B cell (primary cell): ENCODE measurements at regions of chr10 and their contacts with region 1.

Region 1: DNA sequence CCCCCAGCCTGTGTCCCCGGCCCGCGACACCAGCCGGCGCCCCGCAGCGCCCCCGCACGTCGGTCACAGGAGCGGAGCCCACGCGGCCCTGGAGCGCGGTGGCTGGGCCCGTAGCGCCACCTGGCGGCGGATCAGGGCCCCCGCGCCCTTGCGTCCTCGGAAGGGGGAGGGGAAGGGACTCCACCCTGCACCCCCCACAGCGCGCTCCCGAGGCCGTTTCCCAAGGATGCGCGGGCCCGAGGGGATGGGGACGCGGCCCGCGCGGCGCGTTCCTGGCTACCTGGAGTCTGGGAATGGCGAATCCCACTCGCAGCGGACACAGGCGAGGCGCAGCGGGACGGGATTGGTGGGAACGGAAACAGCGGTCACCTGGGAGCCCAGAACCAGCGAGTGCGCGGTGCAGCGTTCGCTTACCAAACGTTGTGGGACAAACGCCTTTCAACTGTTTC is 23.8 kb upstream of the MKI67 start:
- DNase-seq: peak; percentile 85
- ATAC-seq: peak; percentile 84
- H3K4me3 ChIP-seq: peak overlapping the region; percentile 28 to 55 (median 49)
- H3K4me3 Mint-ChIP-seq: peak overlapping the region; percentile 66
- H3K27ac ChIP-seq: no peak overlapping the region
- H3K27ac Mint-ChIP-seq: no peak overlapping the region
- H3K4me1 ChIP-seq: peaks cover 16 to 24% of the 10 kb centered on the region in 2 donors
- H3K4me1 Mint-ChIP-seq: peaks cover 36% of the 10 kb centered on the region
- H3K27me3 ChIP-seq: peaks cover 0 to 14% (median 2%) of the 10 kb centered on the region in 4 experiments
- H3K27me3 Mint-ChIP-seq: peaks cover 28% of the 10 kb centered on the region
- CTCF ChIP-seq: peak; percentile 77

Region 2: GRCh38 chr10:127738512-127739424 is 411.3 kb before region 1 on chr10:
- CTCF ChIA-PET with region 1: no interaction called
- POLR2A ChIA-PET with region 1: no interaction called
- intact Hi-C with region 1: no loop called
- DNase-seq: no peak
- ATAC-seq: no peak
- H3K4me3 ChIP-seq: no peak overlapping the region
- H3K4me3 Mint-ChIP-seq: no peak overlapping the region
- H3K27ac ChIP-seq: no peak overlapping the region
- H3K27ac Mint-ChIP-seq: no peak overlapping the region
- H3K4me1 ChIP-seq: peaks cover 0 to 3% of the 10 kb centered on the region in 2 donors
- H3K4me1 Mint-ChIP-seq: peaks cover 1% of the 10 kb centered on the region
- H3K27me3 ChIP-seq: peaks cover 0 to 32% (median 5%) of the 10 kb centered on the region in 4 experiments
- H3K27me3 Mint-ChIP-seq: peaks cover 23% of the 10 kb centered on the region
- CTCF ChIP-seq: no peak

Region 3: DNA sequence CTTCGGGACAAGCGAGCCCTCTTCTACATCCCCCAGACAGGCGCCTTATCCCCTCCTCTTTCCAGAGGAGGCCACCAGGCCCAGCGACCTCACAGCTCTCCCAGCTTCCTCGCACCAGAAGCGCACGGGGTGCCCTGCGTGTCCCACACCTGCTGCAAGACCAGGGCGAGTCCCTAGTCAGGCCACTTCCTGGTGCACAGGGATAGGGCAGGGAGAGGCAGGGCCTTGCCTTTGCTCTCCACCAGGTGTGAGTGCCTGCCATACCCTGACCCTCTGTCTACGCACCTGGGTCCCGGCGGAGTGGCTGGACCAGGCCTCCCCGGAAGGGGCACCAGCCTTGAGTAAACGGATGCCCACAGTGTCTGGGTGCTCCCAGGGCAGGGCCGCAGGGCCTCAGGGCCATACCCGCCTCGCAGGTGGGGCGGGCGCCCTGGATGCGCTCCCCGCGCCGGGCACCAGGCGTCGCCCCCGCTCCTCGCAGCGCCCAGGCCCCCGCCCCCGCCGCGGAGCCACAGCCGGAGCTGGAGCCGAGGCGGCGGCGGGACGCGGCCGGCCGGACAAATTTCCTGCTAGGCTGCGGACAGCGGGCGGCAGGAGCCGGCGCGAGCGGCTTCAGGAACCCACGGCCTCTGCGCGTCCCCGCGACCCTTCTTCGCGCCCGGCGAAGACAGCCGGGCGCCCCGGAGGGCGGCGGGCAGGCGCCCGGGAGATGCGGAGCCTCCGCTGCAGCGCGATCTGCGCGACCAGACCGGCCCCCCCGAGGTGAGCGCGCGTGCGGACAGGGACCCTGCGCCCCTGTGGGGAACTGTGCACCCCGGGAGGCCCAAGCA is 243.3 kb before region 1 on chr10 and contains the start of gene PTPRE:
- CTCF ChIA-PET with region 1: interaction called, 4 read pairs
- POLR2A ChIA-PET with region 1: no interaction called
- intact Hi-C with region 1: loop called (anchors 2 kb)
- DNase-seq: peak; percentile 78
- ATAC-seq: peak; percentile 95
- H3K4me3 ChIP-seq: peak within 1 kb of the TSS in 3 of 5 experiments; percentile 42 to 62 (median 49)
- H3K4me3 Mint-ChIP-seq: peak within 1 kb of the TSS; percentile 49
- H3K27ac ChIP-seq: no peak within 1 kb of the TSS
- H3K27ac Mint-ChIP-seq: no peak within 1 kb of the TSS
- H3K4me1 ChIP-seq: peaks cover 8 to 9% of the 10 kb centered on the region in 2 donors
- H3K4me1 Mint-ChIP-seq: no peaks in the 10 kb centered on the region
- H3K27me3 ChIP-seq: peaks cover 0 to 30% (median 12%) of the 10 kb centered on the region in 4 experiments
- H3K27me3 Mint-ChIP-seq: peaks cover 57% of the 10 kb centered on the region
- CTCF ChIP-seq: peak; percentile 74
- total RNA-seq, gene PTPRE: 31.5 and 32.7 TPM in 2 replicates

Region 4: GRCh38 chr10:128078136-128078969 is 71.7 kb before region 1 on chr10:
- CTCF ChIA-PET with region 1: interaction called, 16 read pairs
- POLR2A ChIA-PET with region 1: no interaction called
- intact Hi-C with region 1: loop called (anchors 1 kb)
- DNase-seq: peak; percentile 50
- ATAC-seq: no peak
- H3K4me3 ChIP-seq: no peak overlapping the region
- H3K4me3 Mint-ChIP-seq: no peak overlapping the region
- H3K27ac ChIP-seq: no peak overlapping the region
- H3K27ac Mint-ChIP-seq: no peak overlapping the region
- H3K4me1 ChIP-seq: no peaks in the 10 kb centered on the region
- H3K4me1 Mint-ChIP-seq: no peaks in the 10 kb centered on the region
- H3K27me3 ChIP-seq: no peaks in the 10 kb centered on the region
- H3K27me3 Mint-ChIP-seq: no peaks in the 10 kb centered on the region
- CTCF ChIP-seq: peak; percentile 73

Region 5: DNA sequence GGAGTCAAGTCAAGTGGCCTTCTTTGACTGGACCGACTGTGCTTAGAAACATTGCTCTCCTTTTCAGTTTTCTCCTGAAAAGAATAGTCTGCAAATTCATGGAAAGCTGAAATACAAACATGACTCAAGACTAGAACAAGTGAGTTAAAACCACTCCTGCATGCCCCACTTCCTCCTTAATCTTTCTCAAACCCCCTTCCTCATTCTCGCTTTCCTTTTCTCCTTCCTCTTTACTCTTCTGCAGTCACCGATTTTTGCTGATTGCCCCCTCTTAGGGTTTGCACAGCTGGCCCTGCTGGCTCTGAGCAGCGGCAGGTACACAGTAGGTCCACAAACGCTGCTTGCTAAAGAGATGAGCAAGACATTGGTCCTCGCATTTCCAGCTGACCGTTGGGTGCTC is 11.0 kb after region 1 on chr10:
- CTCF ChIA-PET with region 1: interaction called, 13 read pairs
- POLR2A ChIA-PET with region 1: no interaction called
- intact Hi-C with region 1: no loop called
- DNase-seq: peak; percentile 43
- ATAC-seq: peak; percentile 33
- H3K4me3 ChIP-seq: no peak overlapping the region
- H3K4me3 Mint-ChIP-seq: peak overlapping the region; percentile 62
- H3K27ac ChIP-seq: no peak overlapping the region
- H3K27ac Mint-ChIP-seq: no peak overlapping the region
- H3K4me1 ChIP-seq: peaks cover 16 to 19% of the 10 kb centered on the region in 2 donors
- H3K4me1 Mint-ChIP-seq: peaks cover 27% of the 10 kb centered on the region
- H3K27me3 ChIP-seq: peaks cover 0 to 11% (median 2%) of the 10 kb centered on the region in 4 experiments
- H3K27me3 Mint-ChIP-seq: peaks cover 24% of the 10 kb centered on the region
- CTCF ChIP-seq: no peak

Region 6: DNA sequence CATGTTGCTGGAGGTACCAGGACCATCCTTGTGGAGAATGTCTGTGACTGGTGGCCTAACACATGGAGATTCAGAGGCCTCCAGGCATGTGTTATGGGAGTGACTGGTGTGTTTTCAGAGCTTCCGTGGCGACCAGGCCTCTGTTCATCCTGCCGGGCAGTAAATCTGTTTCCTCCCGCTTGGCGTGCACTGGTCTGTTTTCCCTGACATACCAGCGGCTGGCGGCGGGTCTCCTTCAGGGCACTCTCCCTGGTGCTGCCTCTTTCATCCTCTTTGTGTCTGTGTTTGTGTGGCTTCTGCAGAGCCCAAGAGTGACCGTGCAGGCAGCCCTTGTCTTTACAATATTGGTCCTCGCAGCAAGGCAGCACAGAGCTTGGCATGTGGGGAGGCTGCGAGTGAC is 361.2 kb after region 1 on chr10:
- CTCF ChIA-PET with region 1: no interaction called
- POLR2A ChIA-PET with region 1: no interaction called
- intact Hi-C with region 1: no loop called
- DNase-seq: no peak
- ATAC-seq: no peak
- H3K4me3 ChIP-seq: no peak overlapping the region
- H3K4me3 Mint-ChIP-seq: no peak overlapping the region
- H3K27ac ChIP-seq: no peak overlapping the region
- H3K27ac Mint-ChIP-seq: no peak overlapping the region
- H3K4me1 ChIP-seq: no peaks in the 10 kb centered on the region
- H3K4me1 Mint-ChIP-seq: no peaks in the 10 kb centered on the region
- H3K27me3 ChIP-seq: no peaks in the 10 kb centered on the region
- H3K27me3 Mint-ChIP-seq: no peaks in the 10 kb centered on the region
- CTCF ChIP-seq: no peak

Region 7: GRCh38 chr10:130110246-130111112 is 1960.4 kb after region 1 on chr10 and contains the start of gene C10orf143:
- CTCF ChIA-PET with region 1: no interaction called
- POLR2A ChIA-PET with region 1: no interaction called
- intact Hi-C with region 1: loop called (anchors 5 kb)
- DNase-seq: peak; percentile 99
- ATAC-seq: peak; percentile 77
- H3K4me3 ChIP-seq: peak within 1 kb of the TSS; percentile 91 to 98 (median 95)
- H3K4me3 Mint-ChIP-seq: peak within 1 kb of the TSS; percentile 99
- H3K27ac ChIP-seq: peak within 1 kb of the TSS; percentile 87 to 96
- H3K27ac Mint-ChIP-seq: peak within 1 kb of the TSS; percentile 99
- H3K4me1 ChIP-seq: peaks cover 21 to 23% of the 10 kb centered on the region in 2 donors
- H3K4me1 Mint-ChIP-seq: peaks cover 42% of the 10 kb centered on the region
- H3K27me3 ChIP-seq: no peaks in the 10 kb centered on the region
- H3K27me3 Mint-ChIP-seq: no peaks in the 10 kb centered on the region
- CTCF ChIP-seq: no peak
- total RNA-seq, gene C10orf143: 9.1 and 12.3 TPM in 2 replicates